ENCODE measurements at regions of chr11 and their contacts with region 1.

Region 1: GRCh38 chr11:26227296-26227695 is 104.6 kb upstream of the ANO3 start:
- DNase-seq: peak; percentile 94
- ATAC-seq: peak; percentile 86
- H3K4me3 ChIP-seq: peak overlapping the region; percentile 14; the same call in 1 of the 2 replicates
- H3K27ac ChIP-seq: no peak overlapping the region; the same call in 1 of the 2 replicates
- H3K4me1 ChIP-seq: peaks cover 19% of the 10 kb centered on the region
- H3K27me3 ChIP-seq: no peaks in the 10 kb centered on the region
- CTCF ChIP-seq: peak; percentile 85
- POLR2A ChIP-seq: no peak
- RAD21 ChIP-seq: peak; percentile 92

Region 2: DNA sequence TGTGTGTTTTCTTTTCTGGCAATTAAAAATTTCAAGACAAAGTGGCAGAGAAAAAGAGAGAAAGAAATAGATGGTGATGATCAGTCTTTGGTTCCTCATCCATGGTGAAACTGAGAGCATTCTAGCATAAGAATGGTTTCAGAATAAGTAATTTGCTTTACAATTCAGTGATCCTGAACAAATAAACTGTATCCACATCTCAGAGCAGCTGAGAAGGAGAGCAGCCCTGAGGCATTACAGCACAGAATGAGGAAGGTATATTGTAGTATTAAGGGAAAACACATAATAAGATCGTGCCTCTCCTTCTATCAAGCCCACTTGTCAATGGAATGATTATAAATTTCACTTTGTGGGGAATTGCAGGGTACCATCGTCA is 1713.1 kb before region 1 on chr11:
- CTCF ChIA-PET with region 1: no interaction called
- POLR2A ChIA-PET with region 1: no interaction called
- dilution Hi-C with region 1: no loop called
- in situ Hi-C with region 1: loop called (anchors 25 kb)
- intact Hi-C with region 1: loop called (anchors 10 kb)
- DNase-seq: no peak
- ATAC-seq: peak; percentile 48; the same call in 1 of the 2 replicates
- H3K4me3 ChIP-seq: no peak overlapping the region
- H3K27ac ChIP-seq: no peak overlapping the region
- H3K4me1 ChIP-seq: no peaks in the 10 kb centered on the region; the same call in 1 of the 2 replicates
- H3K27me3 ChIP-seq: no peaks in the 10 kb centered on the region
- CTCF ChIP-seq: no peak
- POLR2A ChIP-seq: no peak
- RAD21 ChIP-seq: no peak

Region 3: GRCh38 chr11:25435197-25435596 is 792.1 kb before region 1 on chr11:
- CTCF ChIA-PET with region 1: no interaction called
- POLR2A ChIA-PET with region 1: no interaction called
- dilution Hi-C with region 1: no loop called
- in situ Hi-C with region 1: no loop called
- intact Hi-C with region 1: loop called (anchors 10 kb)
- DNase-seq: no peak
- ATAC-seq: no peak
- H3K4me3 ChIP-seq: no peak overlapping the region
- H3K27ac ChIP-seq: no peak overlapping the region
- H3K4me1 ChIP-seq: no peaks in the 10 kb centered on the region
- H3K27me3 ChIP-seq: no peaks in the 10 kb centered on the region
- CTCF ChIP-seq: no peak
- POLR2A ChIP-seq: no peak
- RAD21 ChIP-seq: no peak

Region 4: DNA sequence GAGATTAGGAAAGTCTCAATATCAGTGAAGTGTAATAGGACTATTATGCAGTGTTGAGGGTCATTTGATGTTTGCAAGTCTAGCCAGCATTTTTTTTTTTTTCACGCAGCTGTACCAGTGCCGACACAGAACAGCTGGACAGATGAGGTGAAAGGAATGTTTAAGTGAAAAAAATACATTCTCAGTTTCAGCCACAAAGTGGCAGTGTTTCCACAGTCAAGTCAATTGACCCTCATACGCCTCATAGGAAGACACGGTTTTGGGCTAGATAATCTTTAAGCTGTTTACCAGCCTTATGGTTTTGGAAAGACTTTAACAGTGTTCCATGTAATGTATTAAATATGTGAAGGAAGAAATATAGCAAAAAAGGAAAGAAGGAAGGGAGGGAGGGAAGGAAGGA is 245.3 kb before region 1 on chr11:
- CTCF ChIA-PET with region 1: interaction called, 15 read pairs
- POLR2A ChIA-PET with region 1: no interaction called
- dilution Hi-C with region 1: no loop called
- in situ Hi-C with region 1: loop called (anchors 5 kb)
- intact Hi-C with region 1: loop called (anchors 1 kb)
- DNase-seq: peak; percentile 77
- ATAC-seq: peak; percentile 87
- H3K4me3 ChIP-seq: no peak overlapping the region
- H3K27ac ChIP-seq: no peak overlapping the region
- H3K4me1 ChIP-seq: no peaks in the 10 kb centered on the region
- H3K27me3 ChIP-seq: no peaks in the 10 kb centered on the region
- CTCF ChIP-seq: peak; percentile 77
- POLR2A ChIP-seq: no peak
- RAD21 ChIP-seq: peak; percentile 84

Region 5: DNA sequence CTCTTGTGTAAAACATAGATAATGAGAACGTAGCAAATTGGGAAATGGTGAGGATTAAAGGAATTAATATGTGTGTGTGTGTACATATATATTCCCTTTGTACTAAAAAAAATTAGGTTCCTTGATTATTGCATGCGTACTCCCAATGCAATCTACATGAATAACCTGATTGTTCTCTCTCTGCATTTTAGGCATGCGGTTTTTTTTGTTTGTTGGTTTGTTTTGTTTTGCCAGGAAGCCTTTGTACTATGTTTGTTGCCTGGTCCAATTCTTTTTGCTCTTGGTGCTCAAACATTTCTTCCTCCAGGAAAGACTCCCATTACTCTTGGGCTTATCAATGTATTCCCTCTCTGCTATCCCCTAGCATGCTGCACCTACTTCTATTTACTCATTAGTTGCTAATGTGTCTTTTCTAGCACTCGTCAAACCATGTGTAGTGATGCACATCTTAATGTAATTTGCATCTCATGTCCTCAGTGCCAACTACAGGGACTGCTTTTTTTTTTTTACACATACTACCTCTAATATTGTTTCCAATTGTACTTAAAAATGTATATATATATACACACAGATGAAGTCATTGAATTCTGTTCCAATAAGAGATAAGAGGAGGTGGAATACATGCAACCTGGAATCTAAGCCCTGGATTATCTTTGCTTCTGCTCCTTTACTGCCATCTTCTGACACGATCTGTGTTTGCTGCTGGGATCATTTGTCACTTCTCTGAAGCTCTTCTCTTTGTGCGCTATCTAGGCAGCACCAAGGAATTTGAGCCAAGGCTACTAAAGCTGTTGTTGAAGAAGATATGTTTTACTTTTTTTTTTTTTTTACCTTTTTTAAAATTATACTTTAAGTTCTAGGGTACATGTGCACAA is 92.6 kb before region 1 on chr11:
- CTCF ChIA-PET with region 1: interaction called, 6 read pairs
- POLR2A ChIA-PET with region 1: no interaction called
- dilution Hi-C with region 1: no loop called
- in situ Hi-C with region 1: no loop called
- intact Hi-C with region 1: loop called (anchors 1 kb)
- DNase-seq: peak; percentile 38
- ATAC-seq: peak; percentile 89
- H3K4me3 ChIP-seq: no peak overlapping the region
- H3K27ac ChIP-seq: no peak overlapping the region
- H3K4me1 ChIP-seq: no peaks in the 10 kb centered on the region
- H3K27me3 ChIP-seq: no peaks in the 10 kb centered on the region
- CTCF ChIP-seq: no peak; the same call in 1 of the 2 replicates
- POLR2A ChIP-seq: no peak
- RAD21 ChIP-seq: peak; percentile 38

Region 6: GRCh38 chr11:26276798-26277424 is 49.6 kb after region 1 on chr11:
- CTCF ChIA-PET with region 1: interaction called, 3 read pairs
- POLR2A ChIA-PET with region 1: no interaction called
- dilution Hi-C with region 1: no loop called
- in situ Hi-C with region 1: no loop called
- intact Hi-C with region 1: loop called (anchors 1 kb)
- DNase-seq: peak; percentile 71
- ATAC-seq: peak; percentile 96
- H3K4me3 ChIP-seq: no peak overlapping the region
- H3K27ac ChIP-seq: no peak overlapping the region
- H3K4me1 ChIP-seq: no peaks in the 10 kb centered on the region
- H3K27me3 ChIP-seq: no peaks in the 10 kb centered on the region
- CTCF ChIP-seq: peak; percentile 98
- POLR2A ChIP-seq: peak; percentile 30; the same call in 1 of the 2 replicates
- RAD21 ChIP-seq: peak; percentile 97

Region 7: DNA sequence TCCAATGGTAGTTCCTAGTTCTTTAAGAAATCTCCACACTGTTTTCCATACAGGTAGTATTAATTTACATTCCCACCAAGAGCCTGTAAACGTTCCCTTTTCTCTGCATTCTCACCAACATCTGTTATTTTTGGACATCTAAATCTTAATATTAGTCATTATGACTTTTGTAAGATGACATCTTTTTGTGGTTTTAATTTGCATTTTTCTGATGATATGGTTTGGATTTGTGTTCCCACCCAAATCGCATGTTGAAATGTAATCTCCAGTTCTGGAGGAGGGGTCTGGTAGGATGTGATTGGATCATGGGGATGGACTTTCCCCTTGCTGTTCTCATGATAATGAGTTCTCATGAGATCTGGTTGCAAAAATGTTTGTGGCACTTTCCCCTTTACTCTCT is 255.8 kb after region 1 on chr11:
- CTCF ChIA-PET with region 1: no interaction called
- POLR2A ChIA-PET with region 1: no interaction called
- dilution Hi-C with region 1: no loop called
- in situ Hi-C with region 1: no loop called
- intact Hi-C with region 1: no loop called
- DNase-seq: no peak
- ATAC-seq: no peak
- H3K4me3 ChIP-seq: no peak overlapping the region
- H3K27ac ChIP-seq: no peak overlapping the region
- H3K4me1 ChIP-seq: no peaks in the 10 kb centered on the region
- H3K27me3 ChIP-seq: no peaks in the 10 kb centered on the region
- CTCF ChIP-seq: no peak
- POLR2A ChIP-seq: no peak
- RAD21 ChIP-seq: no peak

Measured in IMR-90 (cell line).